CD4-positive, alpha-beta T cell (primary cell): ENCODE measurements at regions of chr10 and their contacts with region 1.

Region 1: DNA sequence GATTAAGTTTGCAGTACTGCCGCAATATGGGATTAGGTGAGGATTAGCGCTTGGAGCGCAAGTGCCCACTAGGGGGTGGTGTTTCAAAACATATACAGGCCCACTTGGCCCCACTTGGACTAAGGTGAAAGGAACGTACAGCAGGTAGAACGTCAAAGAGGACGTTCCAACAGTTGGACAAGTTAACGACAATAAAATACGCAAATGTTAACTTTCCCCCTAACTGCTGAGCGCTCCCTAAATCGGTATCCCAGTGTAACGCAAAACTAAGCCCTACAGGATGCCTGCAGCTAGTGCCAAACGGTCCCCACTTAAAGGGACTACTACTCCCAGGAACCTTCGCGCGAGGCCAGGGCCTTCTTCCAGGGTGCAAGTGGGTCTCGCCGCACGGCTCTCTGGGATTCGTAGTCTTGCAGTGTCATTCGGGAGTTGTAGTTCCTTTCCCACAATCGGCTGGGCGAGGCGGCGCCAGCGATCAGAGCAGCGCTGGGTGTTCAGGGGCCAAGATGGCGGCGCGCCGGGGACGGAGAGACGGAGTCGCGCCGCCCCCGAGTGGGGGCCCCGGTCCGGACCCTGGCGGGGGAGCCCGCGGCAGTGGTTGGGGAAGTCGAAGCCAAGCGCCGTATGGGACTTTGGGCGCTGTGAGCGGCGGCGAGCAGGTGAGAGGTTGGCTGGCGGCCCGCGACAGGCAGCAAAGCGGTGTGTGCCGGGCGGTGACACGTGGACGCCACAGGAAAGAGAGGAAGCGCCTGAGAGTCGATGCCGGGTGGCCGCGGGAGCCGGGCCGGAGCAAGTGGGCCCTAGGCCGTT is at the start of gene PPRC1:
- DNase-seq: peak; percentile 93 to 99 (median 95)
- ATAC-seq: peak; percentile 94
- H3K4me3 ChIP-seq: peak within 1 kb of the TSS; percentile 98
- H3K4me3 Mint-ChIP-seq: peak within 1 kb of the TSS; percentile 98
- H3K27ac ChIP-seq: peak within 1 kb of the TSS; percentile 81 to 82
- H3K27ac Mint-ChIP-seq: peak within 1 kb of the TSS; percentile 87
- H3K4me1 ChIP-seq: peaks cover 40% of the 10 kb centered on the region
- H3K4me1 Mint-ChIP-seq: peaks cover 39% of the 10 kb centered on the region
- H3K27me3 ChIP-seq: no peaks in the 10 kb centered on the region
- H3K27me3 Mint-ChIP-seq: no peaks in the 10 kb centered on the region
- CTCF ChIP-seq: peak; percentile 96
- total RNA-seq, gene PPRC1: 22.0 to 22.9 TPM

Region 2: GRCh38 chr10:101818119-101818871 is 314.5 kb before region 1 on chr10 and contains the start of gene OGA:
- CTCF ChIA-PET with region 1: no interaction called
- POLR2A ChIA-PET with region 1: no interaction called
- intact Hi-C with region 1: loop called in 1 of 2 experiments (anchors 1 kb)
- DNase-seq: peak; percentile 92 to 100 (median 98)
- ATAC-seq: peak; percentile 87
- H3K4me3 ChIP-seq: peak within 1 kb of the TSS; percentile 97
- H3K4me3 Mint-ChIP-seq: peak within 1 kb of the TSS; percentile 99
- H3K27ac ChIP-seq: peak within 1 kb of the TSS; percentile 82 to 87
- H3K27ac Mint-ChIP-seq: peak within 1 kb of the TSS; percentile 96
- H3K4me1 ChIP-seq: peaks cover 29% of the 10 kb centered on the region
- H3K4me1 Mint-ChIP-seq: peaks cover 48% of the 10 kb centered on the region
- H3K27me3 ChIP-seq: no peaks in the 10 kb centered on the region
- H3K27me3 Mint-ChIP-seq: no peaks in the 10 kb centered on the region
- CTCF ChIP-seq: no peak
- total RNA-seq, gene OGA: 395 to 416 TPM

Region 3: GRCh38 chr10:102040305-102041050 is 92.3 kb before region 1 on chr10:
- CTCF ChIA-PET with region 1: no interaction called
- POLR2A ChIA-PET with region 1: no interaction called
- intact Hi-C with region 1: no loop called
- DNase-seq: no peak
- ATAC-seq: no peak
- H3K4me3 ChIP-seq: no peak overlapping the region
- H3K4me3 Mint-ChIP-seq: no peak overlapping the region
- H3K27ac ChIP-seq: no peak overlapping the region
- H3K27ac Mint-ChIP-seq: no peak overlapping the region
- H3K4me1 ChIP-seq: peaks cover 4% of the 10 kb centered on the region
- H3K4me1 Mint-ChIP-seq: peaks cover 21% of the 10 kb centered on the region
- H3K27me3 ChIP-seq: no peaks in the 10 kb centered on the region
- H3K27me3 Mint-ChIP-seq: no peaks in the 10 kb centered on the region
- CTCF ChIP-seq: no peak

Region 4: GRCh38 chr10:102064868-102065560 is 67.8 kb before region 1 on chr10 and contains the start of gene HPS6:
- CTCF ChIA-PET with region 1: no interaction called
- POLR2A ChIA-PET with region 1: no interaction called
- intact Hi-C with region 1: loop called in 1 of 2 experiments (anchors 1 kb)
- DNase-seq: peak; percentile 70 to 95 (median 88)
- ATAC-seq: peak; percentile 96
- H3K4me3 ChIP-seq: peak within 1 kb of the TSS; percentile 60
- H3K4me3 Mint-ChIP-seq: peak within 1 kb of the TSS; percentile 92
- H3K27ac ChIP-seq: peak within 1 kb of the TSS; percentile 77 to 82
- H3K27ac Mint-ChIP-seq: peak within 1 kb of the TSS; percentile 89
- H3K4me1 ChIP-seq: peaks cover 39% of the 10 kb centered on the region
- H3K4me1 Mint-ChIP-seq: peaks cover 23% of the 10 kb centered on the region
- H3K27me3 ChIP-seq: no peaks in the 10 kb centered on the region
- H3K27me3 Mint-ChIP-seq: no peaks in the 10 kb centered on the region
- CTCF ChIP-seq: no peak
- total RNA-seq, gene HPS6: 12.8 to 15.0 TPM

Region 5: DNA sequence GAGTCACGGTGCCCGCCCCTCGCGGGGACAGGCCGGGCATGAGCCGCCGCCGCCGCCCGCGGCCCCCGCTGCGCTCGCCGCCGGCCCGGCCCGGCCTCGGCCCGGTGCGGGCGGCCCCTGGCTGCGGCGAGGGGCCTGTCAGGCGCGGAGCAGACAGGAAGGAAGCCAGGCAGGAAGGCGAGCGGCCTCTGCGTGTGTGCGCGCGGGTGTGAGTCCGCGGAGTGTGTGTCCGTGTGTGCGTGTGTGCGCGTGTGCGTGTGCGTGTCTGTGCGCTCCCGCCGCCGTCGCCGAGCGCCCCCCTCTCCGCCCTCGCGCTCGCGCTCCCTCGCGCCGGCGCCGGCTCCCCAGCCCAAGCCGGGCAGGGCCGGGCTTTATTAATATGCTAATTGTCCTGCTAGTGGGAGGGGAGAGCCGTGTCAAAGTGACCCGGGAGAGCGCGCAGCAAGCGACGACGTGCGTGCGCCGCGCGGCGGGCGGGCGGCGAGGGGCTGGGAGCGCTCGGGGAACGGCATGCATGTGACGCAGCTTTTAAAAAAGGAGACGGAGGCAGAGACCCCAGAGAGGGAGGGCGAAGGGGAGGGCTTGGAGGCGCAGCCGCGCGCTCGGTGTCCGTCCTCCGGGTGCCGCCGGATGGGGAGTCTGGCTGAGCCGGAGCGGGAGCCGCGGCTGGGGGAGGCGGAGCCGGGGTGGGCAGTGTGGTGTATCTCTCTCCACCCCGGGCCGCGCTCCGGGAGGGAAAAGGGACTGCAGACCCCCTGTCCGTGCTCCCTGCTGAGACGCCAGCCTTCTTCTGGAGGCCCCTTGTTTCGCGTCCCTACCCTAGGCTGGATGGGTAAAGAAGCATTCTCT is 12.4 kb before region 1 on chr10 and contains the start of gene LDB1:
- CTCF ChIA-PET with region 1: interaction called, 11 read pairs
- POLR2A ChIA-PET with region 1: interaction called, 25 read pairs
- intact Hi-C with region 1: loop called (anchors 1 kb)
- DNase-seq: peak; percentile 52 to 92 (median 66)
- ATAC-seq: peak; percentile 38
- H3K4me3 ChIP-seq: peak within 1 kb of the TSS; percentile 74
- H3K4me3 Mint-ChIP-seq: peak within 1 kb of the TSS; percentile 95
- H3K27ac ChIP-seq: peak within 1 kb of the TSS; percentile 88 to 96
- H3K27ac Mint-ChIP-seq: peak within 1 kb of the TSS; percentile 89
- H3K4me1 ChIP-seq: peaks cover 57% of the 10 kb centered on the region
- H3K4me1 Mint-ChIP-seq: peaks cover 55% of the 10 kb centered on the region
- H3K27me3 ChIP-seq: no peaks in the 10 kb centered on the region
- H3K27me3 Mint-ChIP-seq: no peaks in the 10 kb centered on the region
- CTCF ChIP-seq: no peak
- total RNA-seq, gene LDB1: 116 to 117 TPM

Region 6: GRCh38 chr10:102167861-102168260 is 35.1 kb after region 1 on chr10:
- CTCF ChIA-PET with region 1: interaction called, 11 read pairs
- POLR2A ChIA-PET with region 1: no interaction called
- intact Hi-C with region 1: no loop called
- DNase-seq: no peak
- ATAC-seq: no peak
- H3K4me3 ChIP-seq: no peak overlapping the region
- H3K4me3 Mint-ChIP-seq: no peak overlapping the region
- H3K27ac ChIP-seq: no peak overlapping the region
- H3K27ac Mint-ChIP-seq: no peak overlapping the region
- H3K4me1 ChIP-seq: peaks cover 10% of the 10 kb centered on the region
- H3K4me1 Mint-ChIP-seq: peaks cover 8% of the 10 kb centered on the region
- H3K27me3 ChIP-seq: no peaks in the 10 kb centered on the region
- H3K27me3 Mint-ChIP-seq: peaks cover 4% of the 10 kb centered on the region
- CTCF ChIP-seq: no peak